ENCODE measurements at regions of chr1 and their contacts with region 1.

Region 1: GRCh38 chr1:151934048-151934493 is 24.8 kb upstream of the THEM4 start:
- DNase-seq: no peak
- ATAC-seq: peak; percentile 94
- H3K4me3 ChIP-seq: no peak overlapping the region
- H3K27ac ChIP-seq: peak overlapping the region; percentile 81
- H3K4me1 ChIP-seq: peaks cover 32% of the 10 kb centered on the region
- H3K27me3 ChIP-seq: no peaks in the 10 kb centered on the region
- CTCF ChIP-seq: peak; percentile 94

Region 2: GRCh38 chr1:151619489-151620093 is 314.5 kb before region 1 on chr1:
- CTCF ChIA-PET with region 1: no interaction called
- POLR2A ChIA-PET with region 1: no interaction called
- in situ Hi-C with region 1: no loop called
- intact Hi-C with region 1: no loop called
- DNase-seq: no peak
- ATAC-seq: peak; percentile 85
- H3K4me3 ChIP-seq: no peak overlapping the region
- H3K27ac ChIP-seq: peak overlapping the region; percentile 77
- H3K4me1 ChIP-seq: peaks cover 62% of the 10 kb centered on the region
- H3K27me3 ChIP-seq: no peaks in the 10 kb centered on the region
- CTCF ChIP-seq: no peak

Region 3: DNA sequence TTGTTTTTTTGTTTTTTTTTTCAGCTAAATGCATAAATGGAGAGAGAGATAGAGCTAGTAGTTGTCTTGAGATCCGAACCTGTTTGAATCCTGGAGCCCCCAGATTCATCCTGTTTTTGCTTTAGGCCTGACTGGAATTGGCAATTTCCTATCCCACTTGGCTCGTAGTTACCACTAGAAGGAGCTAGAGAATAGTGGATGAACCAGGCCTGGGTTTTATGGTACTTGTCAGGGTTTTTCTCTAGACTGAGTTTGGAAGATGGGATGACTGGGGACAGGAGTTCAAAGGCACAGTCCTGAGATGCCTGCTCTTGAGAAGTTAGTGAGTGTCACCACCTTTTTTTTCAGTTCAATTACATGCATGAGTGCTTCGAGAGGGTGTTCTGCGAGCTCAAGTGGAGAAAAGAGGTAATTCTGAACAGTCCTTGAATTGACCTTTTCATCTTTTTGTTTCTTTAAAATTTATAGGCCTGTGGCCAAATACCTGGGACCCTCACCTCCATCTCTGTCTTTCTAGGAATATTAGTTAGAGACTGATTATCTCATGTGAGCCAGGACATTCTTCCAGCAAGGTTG is 240.9 kb before region 1 on chr1:
- CTCF ChIA-PET with region 1: no interaction called
- POLR2A ChIA-PET with region 1: no interaction called
- in situ Hi-C with region 1: no loop called
- intact Hi-C with region 1: no loop called
- DNase-seq: peak; percentile 18
- ATAC-seq: 0 out of 2 replicates have a peak, but pooled peaks have one; percentile 65
- H3K4me3 ChIP-seq: no peak overlapping the region
- H3K27ac ChIP-seq: no peak overlapping the region
- H3K4me1 ChIP-seq: no peaks in the 10 kb centered on the region
- H3K27me3 ChIP-seq: no peaks in the 10 kb centered on the region
- CTCF ChIP-seq: peak; percentile 84

Region 4: DNA sequence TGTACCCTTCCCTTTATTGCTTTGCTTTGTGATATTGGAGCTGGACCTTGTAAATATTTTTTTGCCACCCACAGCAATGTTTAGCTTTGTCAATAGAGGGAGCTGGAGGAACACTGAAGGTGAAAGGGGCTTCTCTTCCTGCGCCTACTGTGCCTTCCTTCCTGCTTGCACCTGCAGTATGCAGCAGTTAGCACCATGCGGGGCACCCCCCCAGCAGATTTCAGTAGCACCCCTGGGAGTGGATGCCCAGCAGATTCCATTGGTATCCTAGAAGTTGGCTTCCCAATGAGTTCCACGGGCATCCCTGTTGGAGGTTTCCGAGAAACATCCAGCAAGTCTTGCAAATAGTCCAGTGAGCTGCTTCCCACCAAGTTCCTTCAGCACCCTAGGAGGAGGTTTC is 34.0 kb after region 1 on chr1:
- CTCF ChIA-PET with region 1: interaction called, 3 read pairs
- POLR2A ChIA-PET with region 1: no interaction called
- in situ Hi-C with region 1: no loop called
- intact Hi-C with region 1: loop called (anchors 5 kb)
- DNase-seq: no peak
- ATAC-seq: peak; percentile 71
- H3K4me3 ChIP-seq: no peak overlapping the region
- H3K27ac ChIP-seq: peak overlapping the region; percentile 93
- H3K4me1 ChIP-seq: peaks cover 61% of the 10 kb centered on the region
- H3K27me3 ChIP-seq: no peaks in the 10 kb centered on the region
- CTCF ChIP-seq: peak; percentile 86

Region 5: GRCh38 chr1:152001391-152002249 is 67.5 kb after region 1 on chr1:
- CTCF ChIA-PET with region 1: interaction called, 35 read pairs
- POLR2A ChIA-PET with region 1: no interaction called
- in situ Hi-C with region 1: no loop called
- intact Hi-C with region 1: loop called (anchors 1 kb)
- DNase-seq: no peak
- ATAC-seq: peak; percentile 77
- H3K4me3 ChIP-seq: no peak overlapping the region
- H3K27ac ChIP-seq: peak overlapping the region; percentile 89
- H3K4me1 ChIP-seq: peaks cover 42% of the 10 kb centered on the region
- H3K27me3 ChIP-seq: no peaks in the 10 kb centered on the region
- CTCF ChIP-seq: peak; percentile 94

Region 6: GRCh38 chr1:152018537-152018936 is 84.5 kb after region 1 on chr1:
- CTCF ChIA-PET with region 1: no interaction called
- POLR2A ChIA-PET with region 1: no interaction called
- in situ Hi-C with region 1: no loop called
- intact Hi-C with region 1: loop called (anchors 5 kb)
- DNase-seq: no peak
- ATAC-seq: no peak
- H3K4me3 ChIP-seq: no peak overlapping the region
- H3K27ac ChIP-seq: no peak overlapping the region
- H3K4me1 ChIP-seq: no peaks in the 10 kb centered on the region
- H3K27me3 ChIP-seq: no peaks in the 10 kb centered on the region
- CTCF ChIP-seq: peak; percentile 72

Region 7: DNA sequence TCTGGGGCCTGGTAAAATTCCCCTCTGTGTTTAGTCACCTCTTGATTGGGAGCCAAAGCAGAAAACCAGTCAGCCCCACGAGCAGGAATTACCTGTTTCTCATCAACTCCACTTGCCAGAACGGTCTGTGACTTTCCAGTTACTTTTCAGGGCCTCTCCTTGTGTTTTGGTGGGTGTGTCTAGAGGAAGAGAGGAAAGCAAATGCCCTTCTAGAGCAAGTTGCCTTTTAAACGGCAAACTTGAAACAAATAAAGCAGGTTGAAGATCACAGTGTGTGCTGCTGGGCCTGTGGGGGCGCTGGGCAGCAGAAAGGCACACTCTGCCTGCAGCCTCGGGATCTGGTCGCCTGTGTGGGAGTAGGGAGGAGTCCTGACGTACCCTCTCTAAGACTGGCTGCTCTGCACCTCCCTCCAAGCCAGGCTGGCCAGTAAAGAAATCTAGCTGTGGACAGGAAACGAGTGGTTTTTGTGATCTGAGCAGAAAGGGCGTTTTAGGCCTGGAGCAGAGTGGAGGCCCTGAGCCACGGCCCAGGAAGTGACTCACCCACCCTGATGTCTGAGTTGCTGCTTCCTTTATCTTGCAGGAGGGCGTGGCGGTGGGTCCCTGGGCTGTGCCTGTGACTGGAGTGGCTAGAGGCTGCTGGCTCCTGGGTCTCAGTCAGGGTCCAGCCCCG is 113.8 kb after region 1 on chr1:
- CTCF ChIA-PET with region 1: no interaction called
- POLR2A ChIA-PET with region 1: interaction called, 18 read pairs
- in situ Hi-C with region 1: no loop called
- intact Hi-C with region 1: no loop called
- DNase-seq: peak; percentile 96
- ATAC-seq: peak; percentile 97
- H3K4me3 ChIP-seq: peak overlapping the region; percentile 34 to 59
- H3K27ac ChIP-seq: peak overlapping the region; percentile 99
- H3K4me1 ChIP-seq: peaks cover 23% of the 10 kb centered on the region
- H3K27me3 ChIP-seq: no peaks in the 10 kb centered on the region
- CTCF ChIP-seq: peak; percentile 75